Posterior vena cava (tissue), 2 donors: ENCODE measurements at regions of chr15 and their contacts with region 1.

Region 1: DNA sequence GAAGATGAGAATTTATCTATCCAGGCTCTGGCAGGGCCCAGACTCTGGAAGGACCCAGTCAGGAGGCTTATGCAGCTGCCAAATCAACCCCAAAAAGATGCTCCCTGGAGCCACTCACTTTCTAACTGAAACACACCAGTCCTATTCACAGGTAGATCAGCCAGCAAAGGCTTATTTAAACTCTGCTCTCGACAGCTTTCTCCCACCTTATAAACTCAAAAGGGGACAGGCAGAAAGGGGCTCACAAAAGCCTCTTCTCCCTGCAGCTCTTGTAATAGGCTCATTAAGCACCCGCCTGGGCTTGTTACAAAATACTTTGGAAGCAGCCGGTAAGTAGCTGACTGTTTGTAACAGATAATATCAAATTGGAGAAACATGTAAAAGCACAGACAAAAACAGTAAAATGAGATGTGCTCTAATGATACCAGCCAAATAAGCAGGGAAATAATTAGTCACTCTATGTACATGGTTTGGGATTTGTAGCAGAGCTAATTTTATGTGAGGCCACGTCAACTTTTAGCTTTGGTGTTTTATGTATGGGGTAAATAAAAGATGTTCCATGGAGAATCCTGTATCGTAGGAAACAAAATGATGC is 213.8 kb downstream of the NR2F2 start:
- DNase-seq: no peak

Region 2: DNA sequence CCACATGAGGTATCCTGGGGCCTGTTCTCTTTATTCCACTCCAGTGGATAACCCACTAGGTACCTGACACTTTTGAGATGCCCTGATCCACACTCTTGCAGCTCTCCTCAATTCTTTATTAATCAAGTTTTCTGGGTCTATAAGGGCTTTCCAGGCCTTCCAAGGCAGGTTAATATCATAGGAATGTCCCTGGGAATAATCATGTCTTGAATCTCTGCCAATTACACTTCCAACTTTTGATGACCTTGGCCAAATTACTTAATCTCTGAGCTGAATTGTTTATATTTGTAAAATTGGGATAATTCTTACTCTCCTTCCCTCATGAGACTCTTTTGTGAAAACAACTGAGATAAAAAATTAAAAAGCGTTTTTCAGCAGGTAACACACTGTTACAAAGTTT is 1431.2 kb before region 1 on chr15:
- intact Hi-C with region 1: loop called in 1 of 2 experiments (anchors 5 kb)
- DNase-seq: no peak